Transverse colon (tissue), 4 donors: ENCODE measurements at regions of chr2 and their contacts with region 1.

Region 1: GRCh38 chr2:43455731-43456642 is 139.9 kb downstream of the THADA start:
- DNase-seq: no peak
- H3K4me3 ChIP-seq: no peak overlapping the region
- H3K27ac ChIP-seq: peak overlapping the region; percentile 8 to 49 (median 36)
- H3K4me1 ChIP-seq: peaks cover 7 to 58% (median 18%) of the 10 kb centered on the region in 4 donors
- H3K27me3 ChIP-seq: no peaks in the 10 kb centered on the region
- CTCF ChIP-seq: peak in 1 of 5 experiments; percentile 16
- EP300 ChIP-seq: no peak
- POLR2A ChIP-seq: no peak

Region 2: GRCh38 chr2:43269074-43269572 is 186.9 kb before region 1 on chr2:
- in situ Hi-C with region 1: no loop called
- intact Hi-C with region 1: loop called (anchors 10 kb)
- DNase-seq: peak; percentile 66
- H3K4me3 ChIP-seq: no peak overlapping the region
- H3K27ac ChIP-seq: peak overlapping the region; percentile 81 to 86 (median 84)
- H3K4me1 ChIP-seq: peaks cover 11 to 54% (median 30%) of the 10 kb centered on the region in 4 donors
- H3K27me3 ChIP-seq: no peaks in the 10 kb centered on the region
- CTCF ChIP-seq: no peak
- EP300 ChIP-seq: no peak
- POLR2A ChIP-seq: no peak

Region 3: DNA sequence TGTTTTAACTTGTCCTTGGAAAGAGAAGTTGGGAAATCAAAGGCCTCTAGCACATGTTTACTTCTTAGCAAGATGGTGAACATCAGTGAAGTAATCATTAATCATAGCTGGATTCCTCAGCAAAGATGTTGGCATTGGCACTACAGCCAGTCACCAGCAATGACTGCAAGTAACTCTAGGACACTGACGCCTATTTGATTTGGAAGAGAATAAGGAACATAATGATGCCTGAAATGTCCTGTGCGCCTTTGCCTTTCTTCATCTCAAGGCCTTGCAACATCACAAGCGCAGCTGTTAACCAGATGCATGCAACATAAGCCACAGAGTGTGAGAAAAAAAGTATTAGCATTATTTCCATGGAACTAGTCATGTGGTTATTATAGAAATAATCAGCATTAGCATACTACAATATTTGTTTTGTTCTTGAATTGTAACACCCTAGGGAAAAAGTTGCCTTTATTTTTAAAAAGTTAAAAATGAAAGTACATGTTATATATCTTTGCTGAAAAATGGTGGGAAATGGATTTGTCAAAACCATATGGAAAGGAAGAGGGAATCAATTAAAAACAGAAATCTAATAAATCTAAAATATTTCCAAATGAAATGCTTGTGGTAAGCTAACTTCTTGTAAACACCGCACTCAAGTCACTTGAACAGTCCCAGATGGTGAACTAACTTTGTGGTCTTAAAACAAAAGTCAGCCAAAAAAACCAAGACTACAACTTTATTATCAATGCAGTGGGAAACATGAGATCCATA is 84.2 kb after region 1 on chr2:
- in situ Hi-C with region 1: no loop called
- intact Hi-C with region 1: no loop called
- DNase-seq: peak; percentile 51
- H3K4me3 ChIP-seq: no peak overlapping the region
- H3K27ac ChIP-seq: peak overlapping the region; percentile 57 to 75 (median 70)
- H3K4me1 ChIP-seq: peaks cover 0 to 27% (median 12%) of the 10 kb centered on the region in 4 donors
- H3K27me3 ChIP-seq: no peaks in the 10 kb centered on the region
- CTCF ChIP-seq: no peak
- EP300 ChIP-seq: peak; percentile 95
- POLR2A ChIP-seq: no peak